GM10248 (cell line): ENCODE measurements at regions of chr4 and their contacts with region 1.

Region 1: GRCh38 chr4:119212234-119212963 is at the start of gene USP53:
- DNase-seq: peak; percentile 96
- CTCF ChIP-seq: no peak

Region 2: GRCh38 chr4:119238068-119238722 is 25.8 kb after region 1 on chr4:
- CTCF ChIA-PET with region 1: interaction called, 20 read pairs
- POLR2A ChIA-PET with region 1: interaction called, 3 read pairs
- DNase-seq: peak; percentile 41
- CTCF ChIP-seq: no peak